ENCODE measurements at regions of chr3 and their contacts with region 1.

Region 1: DNA sequence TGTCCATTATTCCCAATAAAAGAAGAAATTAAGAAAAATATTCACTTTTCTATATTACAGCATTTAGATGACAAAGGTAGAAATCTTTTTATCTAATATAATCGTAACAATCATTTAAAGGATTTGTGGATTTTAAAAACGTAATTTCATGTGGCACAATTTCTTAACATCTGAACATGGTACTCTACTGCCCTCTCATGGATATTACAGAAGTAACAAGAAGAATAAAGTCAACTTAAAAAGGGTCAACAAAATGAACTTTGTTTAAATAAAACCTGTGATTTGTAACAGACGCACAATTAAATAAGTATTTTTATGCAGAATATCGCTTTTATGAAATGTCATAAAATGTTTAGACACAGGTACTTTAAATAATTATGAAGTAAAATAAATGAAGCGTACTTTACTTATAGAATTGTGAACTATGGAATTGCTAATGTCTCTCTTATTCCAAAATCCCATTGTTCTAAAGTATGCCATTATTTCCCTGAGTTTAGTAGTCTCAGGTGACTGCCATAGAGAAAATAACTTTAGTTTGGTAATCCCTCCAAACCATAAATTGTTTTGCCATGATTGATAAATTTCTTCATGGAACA is 366.8 kb upstream of the ZNF385D start:
- DNase-seq: no peak
- H3K4me3 ChIP-seq: no peak overlapping the region
- H3K4me3 Mint-ChIP-seq: no peak overlapping the region
- H3K27ac Mint-ChIP-seq: no peak overlapping the region
- H3K4me1 ChIP-seq: no peaks in the 10 kb centered on the region
- H3K4me1 Mint-ChIP-seq: no peaks in the 10 kb centered on the region
- H3K27me3 ChIP-seq: no peaks in the 10 kb centered on the region
- H3K27me3 Mint-ChIP-seq: peaks cover 5% of the 10 kb centered on the region
- CTCF ChIP-seq: peak; percentile 27 to 43

Region 2: GRCh38 chr3:21752749-21753347 is 365.0 kb before region 1 on chr3:
- CTCF ChIA-PET with region 1: no interaction called
- POLR2A ChIA-PET with region 1: no interaction called
- intact Hi-C with region 1: loop called (anchors 1 kb)
- DNase-seq: peak in 1 of 2 experiments; percentile 5
- H3K4me3 ChIP-seq: no peak overlapping the region
- H3K4me3 Mint-ChIP-seq: no peak overlapping the region
- H3K27ac Mint-ChIP-seq: no peak overlapping the region
- H3K4me1 ChIP-seq: no peaks in the 10 kb centered on the region
- H3K4me1 Mint-ChIP-seq: no peaks in the 10 kb centered on the region
- H3K27me3 ChIP-seq: no peaks in the 10 kb centered on the region
- H3K27me3 Mint-ChIP-seq: peaks cover 6% of the 10 kb centered on the region
- CTCF ChIP-seq: peak; percentile 19 to 39

Region 3: DNA sequence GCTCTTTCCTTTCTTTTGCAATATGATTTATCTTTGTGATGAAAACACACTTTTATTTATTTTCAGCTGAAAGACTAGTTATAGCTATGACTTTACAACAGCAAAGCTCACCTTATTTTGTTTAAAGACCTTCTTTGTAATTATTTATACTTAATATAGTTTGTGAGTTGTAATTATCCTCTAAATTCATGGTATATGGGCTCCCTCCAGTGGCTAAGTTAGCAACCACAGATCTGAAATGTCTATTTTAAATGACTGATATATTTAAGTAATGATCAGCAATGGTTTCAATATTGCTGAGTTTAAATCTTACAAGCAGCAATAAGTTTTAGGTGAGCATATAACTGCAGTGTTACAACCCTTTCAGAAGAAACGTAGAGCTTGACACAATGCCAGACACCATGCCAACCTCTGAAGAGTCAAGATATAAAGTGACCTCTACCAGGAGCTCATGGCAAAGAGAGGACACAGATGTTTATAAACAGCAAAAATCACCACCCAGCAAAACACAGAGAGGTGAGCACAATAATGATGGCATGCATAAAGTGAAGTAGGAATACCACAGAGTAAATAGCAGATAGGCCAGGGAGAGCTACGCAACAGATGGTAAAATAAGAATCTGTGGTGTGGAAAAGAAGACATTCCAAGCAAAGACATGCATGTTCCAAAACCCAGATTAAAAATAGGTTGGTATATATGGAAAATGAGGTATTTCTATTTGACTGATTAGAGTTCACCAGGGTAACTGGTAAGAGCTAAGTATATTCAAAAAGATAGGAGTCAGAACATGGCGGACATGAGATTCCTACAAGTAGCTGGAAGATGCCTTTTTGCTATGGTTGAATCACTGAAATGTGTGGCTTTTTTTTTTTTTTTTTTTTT is 223.1 kb before region 1 on chr3:
- CTCF ChIA-PET with region 1: no interaction called
- POLR2A ChIA-PET with region 1: no interaction called
- intact Hi-C with region 1: loop called (anchors 10 kb)
- DNase-seq: no peak
- H3K4me3 ChIP-seq: no peak overlapping the region
- H3K4me3 Mint-ChIP-seq: no peak overlapping the region
- H3K27ac Mint-ChIP-seq: no peak overlapping the region
- H3K4me1 ChIP-seq: no peaks in the 10 kb centered on the region
- H3K4me1 Mint-ChIP-seq: no peaks in the 10 kb centered on the region
- H3K27me3 ChIP-seq: no peaks in the 10 kb centered on the region
- H3K27me3 Mint-ChIP-seq: peaks cover 4% of the 10 kb centered on the region
- CTCF ChIP-seq: peak in 1 of 2 experiments; percentile 27

Region 4: DNA sequence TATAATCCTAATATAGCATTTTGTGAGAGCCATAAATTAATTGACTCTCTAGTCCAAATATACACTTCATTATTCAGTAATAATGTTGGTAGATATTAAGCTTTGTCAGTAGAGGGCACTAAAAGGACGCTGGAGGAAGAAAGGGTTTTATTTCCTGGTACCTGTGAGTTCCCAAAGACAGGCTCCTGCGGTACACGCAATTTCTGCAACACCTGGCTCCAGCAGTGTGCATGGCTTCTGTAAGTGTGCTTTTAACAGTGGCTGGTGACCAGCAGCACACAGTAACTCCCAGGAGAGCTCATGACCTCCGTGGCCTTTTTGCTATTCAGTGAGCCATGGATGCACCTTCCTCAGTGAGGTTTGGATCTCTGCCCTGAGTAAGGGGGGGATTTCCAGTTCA is 28.6 kb before region 1 on chr3:
- CTCF ChIA-PET with region 1: no interaction called
- POLR2A ChIA-PET with region 1: no interaction called
- intact Hi-C with region 1: loop called (anchors 1 kb)
- DNase-seq: peak; percentile 29 to 46
- H3K4me3 ChIP-seq: no peak overlapping the region
- H3K4me3 Mint-ChIP-seq: no peak overlapping the region
- H3K27ac Mint-ChIP-seq: no peak overlapping the region
- H3K4me1 ChIP-seq: no peaks in the 10 kb centered on the region
- H3K4me1 Mint-ChIP-seq: no peaks in the 10 kb centered on the region
- H3K27me3 ChIP-seq: no peaks in the 10 kb centered on the region
- H3K27me3 Mint-ChIP-seq: peaks cover 9% of the 10 kb centered on the region
- CTCF ChIP-seq: peak; percentile 37 to 40

Region 5: DNA sequence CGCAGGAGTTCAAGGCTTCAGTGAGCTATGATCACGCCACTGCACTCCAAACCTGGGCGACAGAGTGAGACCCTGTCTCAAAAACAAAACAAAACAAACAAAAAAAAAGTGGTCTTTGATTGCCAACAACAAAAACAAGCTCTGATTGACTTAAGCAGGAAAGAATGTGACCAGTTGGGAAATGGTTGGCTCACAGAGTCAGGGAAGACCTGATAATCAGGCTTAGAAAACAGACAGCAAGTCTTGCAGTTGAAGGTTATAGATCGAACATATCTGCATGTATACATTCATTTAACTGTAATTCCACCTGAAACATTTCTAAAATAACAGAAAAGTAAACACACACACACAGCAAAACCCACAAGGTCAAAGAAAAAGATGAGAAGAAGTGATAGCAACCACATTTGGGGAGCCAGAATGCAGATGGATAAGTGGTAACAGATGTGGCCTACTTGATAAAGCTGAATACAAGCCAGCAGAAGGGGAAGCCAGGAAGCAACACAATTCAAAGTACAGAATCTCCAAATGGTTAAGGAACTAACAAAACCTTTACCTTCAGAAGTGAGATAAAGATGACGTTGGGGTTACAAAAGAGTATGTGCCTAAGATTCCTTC is 333.0 kb after region 1 on chr3:
- CTCF ChIA-PET with region 1: no interaction called
- POLR2A ChIA-PET with region 1: no interaction called
- intact Hi-C with region 1: no loop called
- DNase-seq: no peak
- H3K4me3 ChIP-seq: no peak overlapping the region
- H3K4me3 Mint-ChIP-seq: no peak overlapping the region
- H3K27ac Mint-ChIP-seq: no peak overlapping the region
- H3K4me1 ChIP-seq: no peaks in the 10 kb centered on the region
- H3K4me1 Mint-ChIP-seq: no peaks in the 10 kb centered on the region
- H3K27me3 ChIP-seq: no peaks in the 10 kb centered on the region
- H3K27me3 Mint-ChIP-seq: peaks cover 5% of the 10 kb centered on the region
- CTCF ChIP-seq: no peak

Region 6: GRCh38 chr3:22685597-22685996 is 567.7 kb after region 1 on chr3:
- CTCF ChIA-PET with region 1: no interaction called
- POLR2A ChIA-PET with region 1: no interaction called
- intact Hi-C with region 1: loop called (anchors 10 kb)
- DNase-seq: peak in 1 of 2 experiments; percentile 19
- H3K4me3 ChIP-seq: no peak overlapping the region
- H3K4me3 Mint-ChIP-seq: no peak overlapping the region
- H3K27ac Mint-ChIP-seq: no peak overlapping the region
- H3K4me1 ChIP-seq: no peaks in the 10 kb centered on the region
- H3K4me1 Mint-ChIP-seq: no peaks in the 10 kb centered on the region
- H3K27me3 ChIP-seq: no peaks in the 10 kb centered on the region
- H3K27me3 Mint-ChIP-seq: peaks cover 13% of the 10 kb centered on the region
- CTCF ChIP-seq: peak; percentile 26 to 36